Adrenal gland (tissue), 19 donors: ENCODE measurements at regions of chr11 and their contacts with region 1.

Region 1: GRCh38 chr11:73193773-73194507 is 24.1 kb upstream of the P2RY2 start:
- DNase-seq: peak in 3 of 7 donors; percentile 13 to 35 (median 13)
- H3K4me3 ChIP-seq: no peak overlapping the region
- H3K27ac ChIP-seq: no peak overlapping the region
- H3K4me1 ChIP-seq: no peaks in the 10 kb centered on the region
- H3K27me3 ChIP-seq: no peaks in the 10 kb centered on the region
- CTCF ChIP-seq: no peak
- POLR2A ChIP-seq: no peak

Region 2: GRCh38 chr11:73053964-73054363 is 140.0 kb before region 1 on chr11:
- intact Hi-C with region 1: no loop called
- DNase-seq: no peak
- H3K4me3 ChIP-seq: no peak overlapping the region
- H3K27ac ChIP-seq: no peak overlapping the region
- H3K4me1 ChIP-seq: peaks cover under 1 to 9% of the 10 kb centered on the region in 2 donors
- H3K27me3 ChIP-seq: no peaks in the 10 kb centered on the region
- CTCF ChIP-seq: no peak
- POLR2A ChIP-seq: no peak

Region 3: GRCh38 chr11:73141848-73142286 is 52.1 kb before region 1 on chr11:
- intact Hi-C with region 1: no loop called
- DNase-seq: peak in 6 of 7 donors; percentile 72 to 84 (median 80)
- H3K4me3 ChIP-seq: peak overlapping the region; percentile 51 to 90 (median 70)
- H3K27ac ChIP-seq: peak overlapping the region; percentile 37 to 97 (median 95)
- H3K4me1 ChIP-seq: peaks cover 29 to 44% of the 10 kb centered on the region in 2 donors
- H3K27me3 ChIP-seq: no peaks in the 10 kb centered on the region
- CTCF ChIP-seq: no peak
- POLR2A ChIP-seq: peak in 1 of 2 donors; percentile 63

Region 4: DNA sequence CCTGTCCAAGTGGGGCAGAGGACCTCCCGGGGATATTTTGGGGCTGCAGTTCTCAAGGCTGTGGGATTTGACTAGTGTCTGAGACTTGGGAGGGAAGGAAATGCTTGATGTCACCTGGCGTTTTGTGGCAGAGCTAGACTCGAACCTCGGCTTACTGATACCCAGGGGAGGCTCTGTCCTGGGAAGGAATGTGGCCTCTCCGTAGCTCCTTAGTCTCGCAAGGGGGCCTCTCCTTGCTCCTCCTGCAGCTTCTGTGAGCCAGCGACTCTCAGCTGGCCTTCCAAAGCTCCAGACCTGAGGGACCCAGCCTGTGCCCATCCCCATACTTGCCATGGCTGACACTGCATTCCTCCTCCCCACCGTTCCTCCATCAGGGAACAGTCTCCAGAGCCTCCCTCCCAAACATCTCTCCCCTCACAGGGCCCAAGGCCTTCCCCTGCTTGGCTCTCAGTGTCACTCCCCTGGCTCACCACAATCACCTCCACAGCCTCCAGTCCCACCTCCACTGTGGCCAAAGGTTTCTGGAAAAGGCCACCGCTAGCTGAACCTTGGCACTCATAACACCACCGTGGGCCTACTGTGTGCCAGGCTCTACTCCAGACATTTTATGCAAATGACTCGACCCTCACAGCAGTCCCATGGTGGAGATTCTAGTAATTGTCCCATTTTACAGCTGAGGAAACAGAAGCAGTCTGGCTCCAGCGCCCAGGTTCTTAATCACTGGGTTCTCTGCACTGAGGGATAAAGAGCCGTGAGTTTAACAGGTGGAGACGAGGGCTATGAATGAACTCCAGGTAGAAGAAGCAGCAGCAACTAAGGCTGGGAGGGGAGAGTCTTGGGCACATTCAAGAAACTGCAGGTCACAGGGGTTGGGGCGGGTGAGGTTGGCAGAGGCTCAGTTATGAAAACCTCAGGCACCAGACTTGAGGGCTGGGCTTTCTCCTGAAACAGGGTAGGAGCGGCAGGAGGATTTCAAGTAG is 36.2 kb after region 1 on chr11:
- intact Hi-C with region 1: loop called in 1 of 2 experiments (anchors 5 kb)
- DNase-seq: peak in 4 of 7 donors; percentile 9 to 35 (median 12)
- H3K4me3 ChIP-seq: no peak overlapping the region
- H3K27ac ChIP-seq: no peak overlapping the region
- H3K4me1 ChIP-seq: no peaks in the 10 kb centered on the region
- H3K27me3 ChIP-seq: no peaks in the 10 kb centered on the region
- CTCF ChIP-seq: no peak
- POLR2A ChIP-seq: no peak